ENCODE measurements at regions of chr15 and their contacts with region 1.

Region 1: GRCh38 chr15:47196057-47196456 is 521.2 kb upstream of the SEMA6D start:
- DNase-seq: peak; percentile 83
- H3K4me3 ChIP-seq: no peak overlapping the region
- H3K27ac ChIP-seq: no peak overlapping the region
- H3K4me1 ChIP-seq: peaks cover 3% of the 10 kb centered on the region
- H3K27me3 ChIP-seq: no peaks in the 10 kb centered on the region
- CTCF ChIP-seq: peak; percentile 85
- POLR2A ChIP-seq: no peak

Region 2: DNA sequence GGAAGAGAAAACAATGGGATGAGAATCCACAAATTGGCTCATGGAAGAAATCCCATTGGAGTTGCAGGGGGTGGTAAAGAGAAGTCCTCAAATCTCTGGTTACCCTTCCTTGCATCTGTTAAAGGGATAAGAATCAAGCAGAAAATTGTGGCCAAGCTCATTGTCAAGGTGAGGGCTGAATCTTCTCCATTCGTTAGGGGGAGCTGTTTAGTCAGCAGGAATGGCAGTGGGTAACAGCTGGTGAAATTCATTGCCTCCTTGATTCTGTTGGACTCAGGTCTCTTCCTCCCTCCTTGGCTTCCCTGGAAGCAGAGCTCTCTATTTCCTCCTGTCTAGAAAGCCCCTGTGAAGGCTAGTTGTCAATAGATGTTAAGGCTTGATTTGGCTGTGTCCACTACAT is 178.2 kb after region 1 on chr15:
- CTCF ChIA-PET with region 1: interaction called, 18 read pairs
- POLR2A ChIA-PET with region 1: no interaction called
- dilution Hi-C with region 1: no loop called
- intact Hi-C with region 1: no loop called
- DNase-seq: peak; percentile 52
- H3K4me3 ChIP-seq: no peak overlapping the region
- H3K27ac ChIP-seq: no peak overlapping the region
- H3K4me1 ChIP-seq: no peaks in the 10 kb centered on the region
- H3K27me3 ChIP-seq: no peaks in the 10 kb centered on the region
- CTCF ChIP-seq: peak; percentile 36 to 49
- POLR2A ChIP-seq: no peak

Region 3: GRCh38 chr15:47473832-47474231 is 277.8 kb after region 1 on chr15:
- CTCF ChIA-PET with region 1: interaction called, 28 read pairs
- POLR2A ChIA-PET with region 1: no interaction called
- dilution Hi-C with region 1: no loop called
- intact Hi-C with region 1: loop called (anchors 1 kb)
- DNase-seq: peak; percentile 91
- H3K4me3 ChIP-seq: no peak overlapping the region
- H3K27ac ChIP-seq: no peak overlapping the region
- H3K4me1 ChIP-seq: peaks cover 10% of the 10 kb centered on the region
- H3K27me3 ChIP-seq: no peaks in the 10 kb centered on the region
- CTCF ChIP-seq: no peak
- POLR2A ChIP-seq: no peak

Region 4: GRCh38 chr15:47652328-47652727 is 456.3 kb after region 1 on chr15:
- CTCF ChIA-PET with region 1: interaction called, 12 read pairs
- POLR2A ChIA-PET with region 1: no interaction called
- dilution Hi-C with region 1: no loop called
- intact Hi-C with region 1: no loop called
- DNase-seq: no peak
- H3K4me3 ChIP-seq: no peak overlapping the region
- H3K27ac ChIP-seq: no peak overlapping the region
- H3K4me1 ChIP-seq: no peaks in the 10 kb centered on the region
- H3K27me3 ChIP-seq: no peaks in the 10 kb centered on the region
- CTCF ChIP-seq: no peak
- POLR2A ChIP-seq: no peak

Region 5: GRCh38 chr15:47750030-47750739 is 554.1 kb after region 1 on chr15:
- CTCF ChIA-PET with region 1: interaction called, 10 read pairs
- POLR2A ChIA-PET with region 1: no interaction called
- dilution Hi-C with region 1: no loop called
- intact Hi-C with region 1: loop called (anchors 10 kb)
- DNase-seq: peak; percentile 84
- H3K4me3 ChIP-seq: no peak overlapping the region
- H3K27ac ChIP-seq: peak overlapping the region; percentile 58
- H3K4me1 ChIP-seq: peaks cover 17% of the 10 kb centered on the region
- H3K27me3 ChIP-seq: no peaks in the 10 kb centered on the region
- CTCF ChIP-seq: no peak
- POLR2A ChIP-seq: no peak

Region 6: GRCh38 chr15:47987908-47988532 is 792.0 kb after region 1 on chr15:
- CTCF ChIA-PET with region 1: interaction called, 355 read pairs
- POLR2A ChIA-PET with region 1: no interaction called
- dilution Hi-C with region 1: no loop called
- intact Hi-C with region 1: loop called (anchors 1 kb)
- DNase-seq: peak; percentile 68
- H3K4me3 ChIP-seq: no peak overlapping the region
- H3K27ac ChIP-seq: no peak overlapping the region
- H3K4me1 ChIP-seq: no peaks in the 10 kb centered on the region
- H3K27me3 ChIP-seq: no peaks in the 10 kb centered on the region
- CTCF ChIP-seq: peak; percentile 40 to 47
- POLR2A ChIP-seq: no peak

Region 7: GRCh38 chr15:48352474-48353072 is 1156.5 kb after region 1 on chr15:
- CTCF ChIA-PET with region 1: interaction called, 18 read pairs
- POLR2A ChIA-PET with region 1: no interaction called
- dilution Hi-C with region 1: no loop called
- intact Hi-C with region 1: loop called (anchors 2 kb)
- DNase-seq: peak; percentile 67
- H3K4me3 ChIP-seq: no peak overlapping the region
- H3K27ac ChIP-seq: no peak overlapping the region
- H3K4me1 ChIP-seq: no peaks in the 10 kb centered on the region
- H3K27me3 ChIP-seq: no peaks in the 10 kb centered on the region
- CTCF ChIP-seq: peak; percentile 68 to 69
- POLR2A ChIP-seq: no peak